ENCODE measurements at regions of chr17 and their contacts with region 1.

Region 1: DNA sequence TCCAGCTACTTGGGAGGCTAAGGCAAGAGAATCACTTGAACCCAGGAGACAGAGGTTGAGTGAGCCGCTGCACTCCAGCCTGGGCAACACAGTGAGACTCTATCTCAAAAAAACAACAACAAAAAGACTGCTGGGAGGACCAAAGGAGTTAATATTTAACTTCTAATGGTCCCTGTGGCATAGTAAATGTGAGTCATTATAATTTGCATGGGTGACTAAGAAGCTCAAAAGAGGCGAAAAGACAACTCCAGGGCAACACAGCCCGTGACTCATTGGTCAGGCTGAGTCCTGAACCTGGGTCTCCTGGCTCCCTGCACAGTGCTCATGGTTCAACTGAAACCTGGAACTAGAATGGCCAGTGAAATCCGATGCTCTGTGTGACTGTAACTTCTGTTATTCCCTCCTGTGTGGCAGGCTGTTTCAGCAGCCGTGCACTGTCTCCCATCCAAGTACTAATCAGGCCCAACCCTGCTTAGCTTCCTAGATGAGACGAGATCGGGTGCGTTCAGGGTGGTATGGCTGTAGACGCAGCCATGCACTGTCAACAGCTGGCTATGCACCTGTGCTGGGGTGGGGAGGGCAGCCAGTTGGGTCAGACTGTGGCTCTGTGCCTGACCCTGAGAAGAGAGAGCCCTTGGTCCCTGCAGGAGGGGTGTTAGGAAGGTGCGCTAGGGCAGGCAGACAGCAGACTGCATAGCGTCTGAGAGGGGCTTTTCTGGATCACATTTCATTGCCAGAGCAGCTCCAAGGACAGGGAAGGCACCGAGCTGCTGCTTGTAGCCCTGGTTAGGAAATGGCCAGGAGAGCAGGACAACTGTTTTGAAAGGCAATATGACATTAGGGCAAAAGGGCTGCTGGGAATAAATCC is 14.5 kb upstream of the GPRC5C start:
- DNase-seq: peak; percentile 90 to 98
- ATAC-seq: peak; percentile 98 to 99
- H3K4me3 ChIP-seq: 0 out of 3 replicates have a peak overlapping the region, but pooled peaks have one; percentile 6
- H3K27ac ChIP-seq: peak overlapping the region; percentile 70 to 86
- H3K4me1 ChIP-seq: peaks cover 28% of the 10 kb centered on the region
- CTCF ChIP-seq: no peak
- EP300 ChIP-seq: no peak
- POLR2A ChIP-seq: no peak
- RAD21 ChIP-seq: peak in 1 of 2 experiments; percentile 20; a peak in 1 of 5 replicates

Region 2: GRCh38 chr17:74340470-74341023 is 76.9 kb before region 1 on chr17:
- CTCF ChIA-PET with region 1: no interaction called
- POLR2A ChIA-PET with region 1: no interaction called
- DNase-seq: no peak
- ATAC-seq: peak in 1 of 2 experiments; percentile 47; a peak in 3 of 6 replicates
- H3K4me3 ChIP-seq: no peak overlapping the region
- H3K27ac ChIP-seq: no peak overlapping the region
- H3K4me1 ChIP-seq: no peaks in the 10 kb centered on the region
- CTCF ChIP-seq: no peak
- EP300 ChIP-seq: no peak
- POLR2A ChIP-seq: no peak
- RAD21 ChIP-seq: no peak

Region 3: GRCh38 chr17:74361230-74362068 is 56.0 kb before region 1 on chr17 and contains the start of gene BTBD17:
- CTCF ChIA-PET with region 1: no interaction called
- POLR2A ChIA-PET with region 1: no interaction called
- DNase-seq: peak; percentile 67 to 74
- ATAC-seq: peak; percentile 78 to 94
- H3K4me3 ChIP-seq: no peak within 1 kb of the TSS
- H3K27ac ChIP-seq: no peak within 1 kb of the TSS
- H3K4me1 ChIP-seq: peaks cover 8% of the 10 kb centered on the region; the same call in 1 of the 3 replicates
- CTCF ChIP-seq: peak; percentile 66
- EP300 ChIP-seq: no peak
- POLR2A ChIP-seq: no peak
- RAD21 ChIP-seq: peak; percentile 58 to 63
- polyA plus RNA-seq, gene BTBD17: not detected in 2 replicates

Region 4: DNA sequence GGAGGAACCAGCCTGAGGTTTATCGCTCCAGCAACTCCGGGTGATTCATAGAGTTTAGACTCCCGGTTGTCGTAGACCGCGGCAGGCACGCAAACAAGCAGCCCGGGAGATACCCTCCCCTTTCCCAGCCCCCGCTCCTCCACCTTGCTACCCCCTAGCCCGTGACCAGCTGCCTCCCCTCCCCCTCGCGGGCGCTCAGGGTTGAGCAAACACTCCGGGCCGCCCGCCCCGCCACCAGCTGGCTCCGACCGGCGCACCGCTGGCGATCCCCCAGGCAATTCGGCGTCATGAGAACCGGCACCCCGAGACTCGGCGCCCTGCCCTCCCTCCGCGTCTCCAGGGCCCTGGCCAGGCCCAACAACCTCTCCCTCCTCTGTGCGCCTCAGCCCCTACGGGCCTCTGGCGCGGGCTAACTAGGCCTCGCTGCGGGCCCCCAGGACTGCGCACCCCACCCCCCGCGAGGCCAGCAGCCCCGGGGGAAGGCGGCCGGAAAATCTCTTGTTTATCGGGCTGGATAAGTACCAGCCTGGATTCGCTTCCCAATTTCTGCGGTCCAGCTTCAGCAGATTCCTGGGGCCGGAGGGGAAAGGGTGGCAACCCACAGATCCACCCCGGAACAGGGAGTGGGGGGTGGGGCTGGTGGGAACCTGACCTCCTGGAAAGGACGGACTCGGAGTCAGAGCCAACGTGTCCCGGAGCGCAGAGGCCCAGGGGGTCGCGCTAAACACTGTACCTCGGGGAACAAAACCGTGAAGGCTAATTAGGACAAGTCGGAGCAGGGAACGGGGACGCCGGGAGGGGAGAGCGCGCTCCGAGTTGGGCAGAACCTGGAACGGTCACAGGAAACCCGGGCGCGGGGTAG is 13.5 kb after region 1 on chr17:
- CTCF ChIA-PET with region 1: interaction called, 25 read pairs
- POLR2A ChIA-PET with region 1: interaction called, 20 read pairs
- DNase-seq: peak; percentile 91 to 97
- ATAC-seq: peak; percentile 66 to 84
- H3K4me3 ChIP-seq: peak overlapping the region; percentile 78
- H3K27ac ChIP-seq: peak overlapping the region; percentile 95 to 99
- H3K4me1 ChIP-seq: peaks cover 42% of the 10 kb centered on the region
- CTCF ChIP-seq: no peak
- EP300 ChIP-seq: peak; percentile 39 to 71; a peak in 2 of 5 replicates
- POLR2A ChIP-seq: peak; percentile 9
- RAD21 ChIP-seq: no peak

Region 5: DNA sequence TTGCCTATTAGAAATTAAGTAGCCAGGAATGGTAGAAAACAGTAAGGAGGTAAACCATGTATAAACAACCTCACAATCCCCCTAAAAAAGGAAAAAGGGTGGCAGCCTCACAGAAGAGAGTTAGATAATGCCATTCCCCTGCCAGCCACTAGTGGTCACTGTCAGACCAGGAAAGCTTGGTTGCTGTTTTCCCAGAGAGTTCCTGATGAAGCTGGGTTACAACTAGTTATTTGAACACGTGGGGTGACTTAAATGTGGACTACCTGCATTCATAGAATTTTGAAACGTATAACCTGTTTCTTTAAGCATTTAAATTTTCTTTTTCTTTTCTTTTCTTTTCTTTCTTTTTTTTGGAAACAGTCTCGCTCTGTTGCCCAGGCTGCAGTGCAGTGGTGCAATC is 20.3 kb after region 1 on chr17:
- CTCF ChIA-PET with region 1: interaction called, 18 read pairs
- POLR2A ChIA-PET with region 1: no interaction called
- DNase-seq: peak in 1 of 2 experiments; percentile 43
- ATAC-seq: no peak
- H3K4me3 ChIP-seq: no peak overlapping the region
- H3K27ac ChIP-seq: no peak overlapping the region
- H3K4me1 ChIP-seq: peaks cover 18% of the 10 kb centered on the region
- CTCF ChIP-seq: peak; percentile 50
- EP300 ChIP-seq: no peak
- POLR2A ChIP-seq: no peak
- RAD21 ChIP-seq: peak in 1 of 2 experiments; percentile 52; a peak in 2 of 5 replicates

Region 6: GRCh38 chr17:74467221-74467951 is 50.0 kb after region 1 on chr17:
- CTCF ChIA-PET with region 1: no interaction called
- POLR2A ChIA-PET with region 1: no interaction called
- DNase-seq: no peak
- ATAC-seq: 0 out of 6 replicates have a peak, but pooled peaks have one; percentile 17 to 32
- H3K4me3 ChIP-seq: no peak overlapping the region
- H3K27ac ChIP-seq: no peak overlapping the region
- H3K4me1 ChIP-seq: no peaks in the 10 kb centered on the region
- CTCF ChIP-seq: no peak
- EP300 ChIP-seq: no peak
- POLR2A ChIP-seq: no peak
- RAD21 ChIP-seq: no peak

Region 7: GRCh38 chr17:74639704-74640151 is 222.3 kb after region 1 on chr17:
- CTCF ChIA-PET with region 1: no interaction called
- POLR2A ChIA-PET with region 1: no interaction called
- DNase-seq: no peak
- ATAC-seq: no peak
- H3K4me3 ChIP-seq: no peak overlapping the region
- H3K27ac ChIP-seq: no peak overlapping the region
- H3K4me1 ChIP-seq: no peaks in the 10 kb centered on the region
- CTCF ChIP-seq: no peak
- EP300 ChIP-seq: no peak
- POLR2A ChIP-seq: no peak
- RAD21 ChIP-seq: no peak